ENCODE measurements at regions of chr1 and their contacts with region 1.

Region 1: DNA sequence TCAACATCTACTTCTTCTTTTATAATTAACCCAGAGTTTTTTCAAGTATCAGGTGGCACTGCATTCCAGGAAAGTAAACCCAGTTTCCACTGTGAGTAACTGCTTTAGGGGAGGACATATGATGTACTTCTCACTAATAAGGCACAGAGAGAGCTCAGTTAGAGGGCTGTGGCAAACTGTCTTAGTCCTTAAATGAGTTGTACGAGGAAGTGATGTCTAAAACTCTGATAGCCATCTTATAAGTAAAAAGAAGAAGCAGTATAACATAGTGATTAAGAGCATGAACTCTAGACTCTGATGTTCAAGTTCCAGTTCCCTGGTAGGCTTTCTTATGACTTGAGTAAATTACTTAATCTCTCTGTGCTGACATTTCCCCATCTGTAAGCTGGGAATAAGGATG is 58.7 kb upstream of the PTGS2 start:
- DNase-seq: peak; percentile 24
- H3K4me3 Mint-ChIP-seq: peak overlapping the region; percentile 69
- H3K27ac Mint-ChIP-seq: peak overlapping the region; percentile 86
- H3K4me1 Mint-ChIP-seq: peaks cover 60% of the 10 kb centered on the region
- H3K27me3 Mint-ChIP-seq: no peaks in the 10 kb centered on the region

Region 2: DNA sequence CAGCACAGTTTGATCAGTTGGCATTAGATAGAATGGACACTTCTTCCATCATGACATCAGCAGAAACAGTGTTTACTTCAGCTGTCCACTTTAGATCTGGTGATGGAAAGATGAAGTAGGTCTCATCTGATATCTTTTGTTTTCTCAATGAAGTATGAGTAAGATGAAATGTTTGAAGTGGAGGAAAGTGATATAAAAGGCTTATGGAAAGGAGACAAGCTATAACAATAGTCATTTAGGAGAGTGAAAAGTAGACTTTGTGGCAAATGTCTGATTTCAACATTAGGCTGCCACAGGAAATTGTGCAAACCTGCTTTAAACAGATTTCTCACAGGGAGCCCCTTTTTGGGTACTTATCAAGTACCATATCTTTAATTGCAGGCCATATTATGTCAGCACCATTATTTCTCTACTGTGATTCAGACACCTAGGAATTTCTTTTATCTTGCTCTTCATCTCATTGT is 296.2 kb before region 1 on chr1:
- intact Hi-C with region 1: loop called (anchors 1 kb)
- DNase-seq: no peak
- H3K4me3 Mint-ChIP-seq: no peak overlapping the region
- H3K27ac Mint-ChIP-seq: peak overlapping the region; percentile 3
- H3K4me1 Mint-ChIP-seq: peaks cover 18% of the 10 kb centered on the region
- H3K27me3 Mint-ChIP-seq: peaks cover 4% of the 10 kb centered on the region

Region 3: DNA sequence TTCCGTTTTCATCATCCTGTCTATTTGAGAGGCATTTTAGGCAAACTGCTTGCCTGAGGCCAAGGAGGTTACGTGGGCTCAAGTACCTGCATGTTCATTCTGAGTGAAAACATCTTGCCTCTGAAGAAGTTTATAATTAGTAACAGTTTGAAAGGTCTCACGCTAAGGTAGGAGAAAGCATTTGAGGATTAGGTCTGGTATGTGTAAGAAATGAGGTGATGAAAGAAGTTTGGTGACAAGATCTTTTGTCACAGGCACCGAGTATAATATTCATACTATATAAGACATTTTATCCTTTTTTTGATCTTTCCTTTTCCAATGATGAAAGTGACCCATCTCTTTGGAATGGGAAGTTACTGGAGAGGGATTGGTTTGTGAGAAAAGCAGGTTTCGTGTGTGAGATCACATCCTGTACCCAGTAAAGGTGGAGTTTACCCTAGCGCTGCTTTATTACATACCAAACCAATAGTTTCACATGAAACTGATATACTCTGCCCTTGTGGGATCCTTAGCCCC is 179.3 kb before region 1 on chr1:
- intact Hi-C with region 1: no loop called
- DNase-seq: no peak
- H3K4me3 Mint-ChIP-seq: no peak overlapping the region
- H3K27ac Mint-ChIP-seq: no peak overlapping the region
- H3K4me1 Mint-ChIP-seq: no peaks in the 10 kb centered on the region
- H3K27me3 Mint-ChIP-seq: peaks cover 5% of the 10 kb centered on the region

Region 4: DNA sequence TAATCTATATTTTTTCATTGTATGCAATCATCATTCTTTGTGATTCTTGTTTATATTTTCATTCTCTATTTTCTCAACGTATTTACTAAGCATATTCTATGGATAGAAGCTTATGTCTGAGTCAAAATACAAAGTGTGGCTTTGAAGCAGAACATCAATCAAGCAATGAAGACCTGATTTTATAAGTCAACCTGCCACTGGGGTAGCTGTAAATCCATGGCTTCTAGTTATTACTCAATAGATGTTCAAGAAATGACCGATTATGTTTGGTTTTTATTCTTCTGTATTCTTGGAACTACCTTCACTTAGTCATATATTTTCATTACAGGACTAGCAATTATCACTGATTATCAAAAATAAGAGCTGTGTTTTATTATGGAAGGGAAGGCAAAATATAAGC is 38.2 kb before region 1 on chr1:
- intact Hi-C with region 1: loop called (anchors 2 kb)
- DNase-seq: no peak
- H3K4me3 Mint-ChIP-seq: no peak overlapping the region
- H3K27ac Mint-ChIP-seq: no peak overlapping the region
- H3K4me1 Mint-ChIP-seq: peaks cover 8% of the 10 kb centered on the region
- H3K27me3 Mint-ChIP-seq: peaks cover 6% of the 10 kb centered on the region

Region 5: GRCh38 chr1:186772228-186772627 is 33.3 kb after region 1 on chr1:
- intact Hi-C with region 1: loop called (anchors 5 kb)
- DNase-seq: no peak
- H3K4me3 Mint-ChIP-seq: no peak overlapping the region
- H3K27ac Mint-ChIP-seq: no peak overlapping the region
- H3K4me1 Mint-ChIP-seq: peaks cover 21% of the 10 kb centered on the region
- H3K27me3 Mint-ChIP-seq: peaks cover 15% of the 10 kb centered on the region

Region 6: DNA sequence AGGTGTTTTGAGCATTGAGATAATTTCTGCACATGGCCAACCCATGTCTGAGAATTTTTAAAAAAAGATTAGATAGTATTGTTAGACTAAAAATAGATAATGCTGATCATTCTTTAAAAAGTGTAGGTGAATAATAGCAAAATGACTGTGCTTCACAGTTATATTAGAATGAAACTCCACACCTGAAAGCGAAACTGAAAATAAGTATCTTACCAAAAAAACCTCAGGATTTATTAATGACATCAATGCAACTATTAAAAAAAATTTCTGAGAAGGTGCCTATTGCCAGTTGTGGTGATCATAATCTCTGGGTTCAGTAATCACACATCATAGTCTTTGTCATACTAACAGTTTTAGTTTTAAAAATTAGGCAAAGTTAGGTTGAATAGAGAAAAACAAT is 126.3 kb after region 1 on chr1:
- intact Hi-C with region 1: loop called (anchors 1 kb)
- DNase-seq: no peak
- H3K4me3 Mint-ChIP-seq: no peak overlapping the region
- H3K27ac Mint-ChIP-seq: peak overlapping the region; percentile 90
- H3K4me1 Mint-ChIP-seq: peaks cover 35% of the 10 kb centered on the region
- H3K27me3 Mint-ChIP-seq: no peaks in the 10 kb centered on the region